ENCODE measurements at regions of chr22 and their contacts with region 1.

Region 1: DNA sequence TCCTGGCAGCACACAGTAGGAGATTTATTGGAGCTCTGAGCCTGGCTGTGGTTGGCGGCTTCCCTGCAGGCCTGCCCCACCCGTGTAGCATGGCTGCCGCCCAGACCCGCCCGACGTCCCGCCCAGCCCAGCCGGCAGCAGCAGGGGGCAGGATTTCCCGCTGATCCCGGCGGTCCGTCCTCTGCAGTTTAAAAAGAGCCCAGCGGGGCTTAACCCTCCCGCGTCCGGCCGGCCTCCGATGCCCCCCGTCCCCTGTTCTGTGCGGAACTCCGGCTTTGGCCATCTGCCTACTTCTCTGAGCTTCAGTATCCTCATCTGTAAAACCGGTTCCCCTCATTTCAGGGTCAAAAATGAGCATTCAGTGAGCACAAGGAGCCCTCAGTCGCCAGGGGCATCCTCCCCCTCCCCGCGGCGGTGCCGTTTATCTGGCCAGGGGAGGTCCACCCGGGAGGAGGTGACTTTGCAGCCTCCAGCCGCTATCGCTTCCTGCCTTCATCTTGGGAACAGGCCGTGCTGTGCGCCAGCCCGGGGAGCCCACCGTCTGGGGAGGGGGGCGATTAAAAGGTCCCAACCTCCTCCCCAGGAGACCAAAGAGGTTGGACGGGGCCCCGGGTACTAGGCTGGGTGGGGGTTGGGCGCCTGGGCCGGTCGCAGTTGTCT is at the start of gene GAS2L1:
- DNase-seq: no peak
- H3K4me3 ChIP-seq: peak within 1 kb of the TSS; percentile 88 to 99 (median 96)
- H3K27ac ChIP-seq: peak within 1 kb of the TSS; percentile 92 to 97 (median 94)
- H3K4me1 ChIP-seq: peaks cover 46 to 70% (median 66%) of the 10 kb centered on the region in 4 donors
- H3K27me3 ChIP-seq: no peaks in the 10 kb centered on the region
- CTCF ChIP-seq: peak; percentile 83 to 90 (median 85)
- EP300 ChIP-seq: no peak
- POLR2A ChIP-seq: no peak
- total RNA-seq, gene GAS2L1: 25.8 to 63.9 (median 38.8) TPM

Region 2: GRCh38 chr22:29267858-29268417 is 38.4 kb before region 1 on chr22 and contains the starts of genes EWSR1 and RHBDD3:
- intact Hi-C with region 1: loop called (anchors 2 kb)
- DNase-seq: peak; percentile 98
- H3K4me3 ChIP-seq: peak within 1 kb of the TSS; percentile 73 to 99 (median 90)
- H3K27ac ChIP-seq: peak within 1 kb of the TSS; percentile 96 to 100 (median 98)
- H3K4me1 ChIP-seq: peaks cover 46 to 60% (median 57%) of the 10 kb centered on the region in 4 donors
- H3K27me3 ChIP-seq: no peaks in the 10 kb centered on the region
- CTCF ChIP-seq: peak in 1 of 3 experiments; percentile 17
- EP300 ChIP-seq: no peak
- POLR2A ChIP-seq: peak; percentile 74
- total RNA-seq, gene EWSR1: 183 to 203 (median 198) TPM
- total RNA-seq, gene RHBDD3: 12.6 to 23.5 (median 20.7) TPM

Region 3: GRCh38 chr22:29359469-29359868 is 53.2 kb after region 1 on chr22:
- intact Hi-C with region 1: loop called (anchors 1 kb)
- DNase-seq: no peak
- H3K4me3 ChIP-seq: no peak overlapping the region
- H3K27ac ChIP-seq: no peak overlapping the region
- H3K4me1 ChIP-seq: peaks cover 10 to 16% (median 12%) of the 10 kb centered on the region in 4 donors
- H3K27me3 ChIP-seq: no peaks in the 10 kb centered on the region
- CTCF ChIP-seq: peak; percentile 70 to 81 (median 73)
- EP300 ChIP-seq: no peak
- POLR2A ChIP-seq: no peak

Region 4: GRCh38 chr22:29387921-29388758 is 81.8 kb after region 1 on chr22 and contains the start of gene AP1B1:
- intact Hi-C with region 1: loop called (anchors 2 kb)
- DNase-seq: peak; percentile 96
- H3K4me3 ChIP-seq: peak within 1 kb of the TSS; percentile 69 to 80 (median 74)
- H3K27ac ChIP-seq: peak within 1 kb of the TSS; percentile 83 to 91 (median 85)
- H3K4me1 ChIP-seq: peaks cover 13 to 51% (median 39%) of the 10 kb centered on the region in 4 donors
- H3K27me3 ChIP-seq: no peaks in the 10 kb centered on the region
- CTCF ChIP-seq: peak in 1 of 3 experiments; percentile 17
- EP300 ChIP-seq: no peak
- POLR2A ChIP-seq: peak; percentile 29
- total RNA-seq, gene AP1B1: 55.6 to 72.2 (median 57.4) TPM

Measured in esophagus muscularis mucosa (tissue), 4 donors.